Activated CD4-positive, alpha-beta T cell treated with anti-CD3 and anti-CD28 coated beads, Interleukin-2, amount 10 ng/mL, durations not matched to agents 7 days and 5 days (primary cell): ENCODE measurements at regions of chr1 and their contacts with region 1.

Region 1: DNA sequence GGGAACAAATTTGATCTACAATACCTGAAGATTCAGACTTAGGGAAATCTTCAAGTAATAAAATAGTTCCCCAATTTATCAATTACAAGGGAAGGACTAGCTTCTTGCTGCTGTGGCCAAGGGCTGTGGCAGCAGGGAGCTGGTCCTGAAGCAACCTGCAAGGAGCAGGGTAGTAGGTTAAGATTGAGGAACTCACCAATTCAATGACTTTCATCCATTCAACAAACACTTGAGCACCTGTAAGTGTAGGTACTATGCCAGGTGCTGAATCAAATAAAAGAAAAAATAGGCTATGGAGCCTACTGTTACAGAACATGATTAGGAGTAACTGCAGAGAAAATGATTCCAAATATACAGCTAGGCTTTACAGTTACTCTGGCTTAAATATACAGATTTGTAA is 64.2 kb upstream of the RBM34 start:
- DNase-seq: no peak
- H3K4me3 Mint-ChIP-seq: no peak overlapping the region
- H3K27ac Mint-ChIP-seq: no peak overlapping the region
- H3K4me1 Mint-ChIP-seq: peaks cover 2% of the 10 kb centered on the region
- H3K27me3 Mint-ChIP-seq: no peaks in the 10 kb centered on the region

Region 2: GRCh38 chr1:235642011-235642942 is 417.0 kb after region 1 on chr1:
- CTCF ChIA-PET with region 1: no interaction called
- POLR2A ChIA-PET with region 1: interaction called, 13 read pairs
- DNase-seq: peak; percentile 78
- H3K4me3 Mint-ChIP-seq: peak overlapping the region; percentile 71
- H3K27ac Mint-ChIP-seq: peak overlapping the region; percentile 93
- H3K4me1 Mint-ChIP-seq: peaks cover 33% of the 10 kb centered on the region
- H3K27me3 Mint-ChIP-seq: peaks cover 20% of the 10 kb centered on the region